CD14-positive monocyte (primary cell): ENCODE measurements at regions of chr3 and their contacts with region 1.

Region 1: GRCh38 chr3:158434412-158435038 is 136.5 kb upstream of the MLF1 start:
- DNase-seq: peak; percentile 11 to 39 (median 32)
- H3K4me3 ChIP-seq: no peak overlapping the region
- H3K4me3 Mint-ChIP-seq: no peak overlapping the region
- H3K27ac ChIP-seq: no peak overlapping the region
- H3K27ac Mint-ChIP-seq: no peak overlapping the region
- H3K4me1 ChIP-seq: no peaks in the 10 kb centered on the region
- H3K4me1 Mint-ChIP-seq: no peaks in the 10 kb centered on the region
- H3K27me3 ChIP-seq: no peaks in the 10 kb centered on the region
- H3K27me3 Mint-ChIP-seq: no peaks in the 10 kb centered on the region
- CTCF ChIP-seq: peak; percentile 74

Region 2: GRCh38 chr3:157618075-157618760 is 816.3 kb before region 1 on chr3:
- intact Hi-C with region 1: loop called in 1 of 2 experiments (anchors 10 kb)
- DNase-seq: peak; percentile 15 to 69 (median 66)
- H3K4me3 ChIP-seq: no peak overlapping the region
- H3K4me3 Mint-ChIP-seq: no peak overlapping the region
- H3K27ac ChIP-seq: no peak overlapping the region
- H3K27ac Mint-ChIP-seq: no peak overlapping the region
- H3K4me1 ChIP-seq: no peaks in the 10 kb centered on the region
- H3K4me1 Mint-ChIP-seq: peaks cover 5% of the 10 kb centered on the region
- H3K27me3 ChIP-seq: no peaks in the 10 kb centered on the region
- H3K27me3 Mint-ChIP-seq: peaks cover under 1 to 25% (median 2%) of the 10 kb centered on the region in 3 donors
- CTCF ChIP-seq: peak; percentile 85

Region 3: GRCh38 chr3:157865352-157866000 is 569.0 kb before region 1 on chr3:
- intact Hi-C with region 1: loop called in 1 of 2 experiments (anchors 10 kb)
- DNase-seq: peak; percentile 2 to 31 (median 10)
- H3K4me3 ChIP-seq: no peak overlapping the region
- H3K4me3 Mint-ChIP-seq: no peak overlapping the region
- H3K27ac ChIP-seq: no peak overlapping the region
- H3K27ac Mint-ChIP-seq: no peak overlapping the region
- H3K4me1 ChIP-seq: no peaks in the 10 kb centered on the region
- H3K4me1 Mint-ChIP-seq: no peaks in the 10 kb centered on the region
- H3K27me3 ChIP-seq: no peaks in the 10 kb centered on the region
- H3K27me3 Mint-ChIP-seq: peaks cover 2 to 4% (median 3%) of the 10 kb centered on the region in 3 donors
- CTCF ChIP-seq: peak; percentile 83

Region 4: GRCh38 chr3:158097593-158098308 is 336.8 kb before region 1 on chr3:
- intact Hi-C with region 1: loop called in 1 of 2 experiments (anchors 10 kb)
- DNase-seq: peak; percentile 52 to 67 (median 60)
- H3K4me3 ChIP-seq: peak overlapping the region; percentile 58 to 90 (median 60)
- H3K4me3 Mint-ChIP-seq: peak overlapping the region; percentile 97 to 99
- H3K27ac ChIP-seq: peak overlapping the region in 1 of 2 donors; percentile 50
- H3K27ac Mint-ChIP-seq: peak overlapping the region in 6 of 7 donors; percentile 60 to 85 (median 71)
- H3K4me1 ChIP-seq: peaks cover 42 to 47% of the 10 kb centered on the region in 2 donors
- H3K4me1 Mint-ChIP-seq: peaks cover 49% of the 10 kb centered on the region
- H3K27me3 ChIP-seq: peaks cover 82 to 92% of the 10 kb centered on the region in 2 donors
- H3K27me3 Mint-ChIP-seq: peaks cover 89 to 94% (median 89%) of the 10 kb centered on the region in 3 donors
- CTCF ChIP-seq: no peak

Region 5: GRCh38 chr3:158488670-158489069 is 54.1 kb after region 1 on chr3:
- intact Hi-C with region 1: no loop called
- DNase-seq: no peak
- H3K4me3 ChIP-seq: no peak overlapping the region
- H3K4me3 Mint-ChIP-seq: no peak overlapping the region
- H3K27ac ChIP-seq: no peak overlapping the region
- H3K27ac Mint-ChIP-seq: no peak overlapping the region
- H3K4me1 ChIP-seq: no peaks in the 10 kb centered on the region
- H3K4me1 Mint-ChIP-seq: peaks cover 10% of the 10 kb centered on the region
- H3K27me3 ChIP-seq: no peaks in the 10 kb centered on the region
- H3K27me3 Mint-ChIP-seq: no peaks in the 10 kb centered on the region
- CTCF ChIP-seq: no peak